Naive thymus-derived CD4-positive, alpha-beta T cell (primary cell): ENCODE measurements at regions of chr12 and their contacts with region 1.

Region 1: DNA sequence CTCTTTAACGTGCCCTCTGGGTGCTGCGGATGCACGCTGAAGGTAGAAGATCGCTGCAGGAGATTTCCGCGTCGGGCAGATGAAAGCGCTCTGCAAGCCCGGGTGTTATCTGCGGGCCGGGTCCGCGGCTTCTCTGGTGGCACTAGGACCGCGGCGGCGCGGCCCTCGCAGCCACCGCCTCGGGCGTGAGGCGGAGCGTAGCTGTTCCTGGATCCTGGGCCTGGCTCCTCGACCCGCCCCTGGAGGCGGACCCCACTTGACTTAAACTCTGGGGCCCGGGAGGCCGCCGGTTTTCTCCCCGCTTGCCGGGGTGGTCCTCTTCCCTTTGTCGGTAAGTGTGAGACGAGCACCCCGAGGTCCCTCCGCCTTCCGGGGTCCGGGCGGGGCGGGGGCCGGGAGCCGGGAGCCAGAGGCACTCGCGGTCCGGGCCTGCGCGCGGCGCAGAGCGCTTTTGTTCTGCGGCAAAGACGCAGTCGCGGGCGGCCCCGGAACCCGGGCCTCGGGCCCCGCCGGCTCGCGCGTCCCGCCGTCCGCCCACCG is at the start of gene RESF1:
- DNase-seq: peak; percentile 67 to 89 (median 85)
- ATAC-seq: peak; percentile 88
- H3K4me3 ChIP-seq: peak within 1 kb of the TSS; percentile 91
- H3K4me3 Mint-ChIP-seq: peak within 1 kb of the TSS; percentile 91 to 97 (median 94)
- H3K27ac ChIP-seq: peak within 1 kb of the TSS; percentile 86
- H3K27ac Mint-ChIP-seq: peak within 1 kb of the TSS; percentile 91 to 98 (median 96)
- H3K4me1 ChIP-seq: peaks cover 23 to 49% of the 10 kb centered on the region in 2 donors
- H3K4me1 Mint-ChIP-seq: peaks cover 43 to 74% (median 57%) of the 10 kb centered on the region in 7 donors
- H3K27me3 ChIP-seq: no peaks in the 10 kb centered on the region
- H3K27me3 Mint-ChIP-seq: no peaks in the 10 kb centered on the region
- total RNA-seq, gene RESF1: 141 to 490 (median 161) TPM

Region 2: DNA sequence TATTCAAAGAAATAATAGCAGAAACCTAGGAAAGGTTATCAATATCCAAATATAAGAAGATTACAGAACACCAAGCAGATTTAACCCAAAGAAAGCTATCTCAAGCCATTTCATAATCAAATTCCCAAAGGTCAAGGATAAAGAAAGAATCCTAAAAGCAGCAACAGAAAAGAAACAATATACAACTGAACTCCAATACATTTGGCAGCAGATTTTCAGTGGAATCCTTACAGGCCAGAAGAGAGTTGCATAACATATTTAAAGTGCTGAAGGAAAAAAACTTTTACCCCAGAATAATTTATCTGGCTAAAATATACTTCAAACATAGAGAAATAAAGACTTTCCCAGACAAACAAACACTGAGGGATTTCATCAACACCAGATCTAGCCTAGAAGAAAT is 422.6 kb before region 1 on chr12:
- CTCF ChIA-PET with region 1: no interaction called
- POLR2A ChIA-PET with region 1: no interaction called
- intact Hi-C with region 1: no loop called
- DNase-seq: no peak
- ATAC-seq: no peak
- H3K4me3 ChIP-seq: no peak overlapping the region
- H3K4me3 Mint-ChIP-seq: no peak overlapping the region
- H3K27ac ChIP-seq: no peak overlapping the region
- H3K27ac Mint-ChIP-seq: no peak overlapping the region
- H3K4me1 ChIP-seq: no peaks in the 10 kb centered on the region
- H3K4me1 Mint-ChIP-seq: no peaks in the 10 kb centered on the region
- H3K27me3 ChIP-seq: no peaks in the 10 kb centered on the region
- H3K27me3 Mint-ChIP-seq: peaks cover 12 to 40% (median 29%) of the 10 kb centered on the region in 5 donors

Region 3: DNA sequence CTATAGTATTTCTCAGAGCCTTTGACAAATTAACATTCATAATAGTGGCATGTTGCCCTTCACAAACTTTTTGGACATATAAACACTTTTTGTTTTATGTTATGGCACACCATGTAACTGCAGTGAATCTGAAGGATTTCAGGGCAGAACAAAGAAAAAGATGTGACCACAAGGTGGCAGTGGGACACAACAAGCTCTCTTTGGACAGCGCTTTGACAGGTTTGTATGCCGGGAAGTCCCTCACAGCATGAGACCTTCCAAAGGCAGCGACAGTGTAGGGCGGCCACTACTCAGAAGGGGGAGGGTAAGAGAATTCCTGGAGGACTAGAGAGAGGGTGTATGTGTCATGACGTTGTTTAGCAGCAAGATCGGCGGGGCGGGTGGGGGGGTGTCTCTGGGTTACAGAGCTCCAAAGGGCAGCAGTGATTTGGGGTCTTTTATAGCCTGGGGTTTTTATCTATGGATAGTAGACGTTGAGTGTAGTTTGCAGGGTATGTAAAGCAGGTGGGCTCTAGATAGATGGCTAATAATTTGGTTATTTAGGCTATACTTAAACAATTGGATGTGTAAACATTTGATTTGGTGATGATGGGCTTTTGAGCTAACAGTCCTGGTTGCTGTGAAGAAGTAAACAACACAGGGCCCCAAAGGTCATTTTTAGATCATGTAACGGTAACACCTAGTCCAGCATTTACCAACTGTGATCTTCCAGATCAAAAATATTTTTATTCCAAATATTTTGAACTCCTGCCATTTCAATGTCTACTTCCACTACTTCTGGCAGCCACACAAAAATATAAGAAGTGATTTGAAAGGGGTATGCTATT is 276.9 kb before region 1 on chr12:
- CTCF ChIA-PET with region 1: interaction called, 8 read pairs
- POLR2A ChIA-PET with region 1: interaction called, 4 read pairs
- intact Hi-C with region 1: loop called (anchors 1 to 2 kb)
- DNase-seq: peak; percentile 30 to 72 (median 66)
- ATAC-seq: peak; percentile 96
- H3K4me3 ChIP-seq: no peak overlapping the region
- H3K4me3 Mint-ChIP-seq: peak overlapping the region in 9 of 10 donors; percentile 2 to 74 (median 23)
- H3K27ac ChIP-seq: no peak overlapping the region
- H3K27ac Mint-ChIP-seq: peak overlapping the region; percentile 9 to 97 (median 74)
- H3K4me1 ChIP-seq: peaks cover 0 to 5% of the 10 kb centered on the region in 2 donors
- H3K4me1 Mint-ChIP-seq: peaks cover 5 to 17% (median 11%) of the 10 kb centered on the region in 7 donors
- H3K27me3 ChIP-seq: no peaks in the 10 kb centered on the region
- H3K27me3 Mint-ChIP-seq: no peaks in the 10 kb centered on the region

Region 4: DNA sequence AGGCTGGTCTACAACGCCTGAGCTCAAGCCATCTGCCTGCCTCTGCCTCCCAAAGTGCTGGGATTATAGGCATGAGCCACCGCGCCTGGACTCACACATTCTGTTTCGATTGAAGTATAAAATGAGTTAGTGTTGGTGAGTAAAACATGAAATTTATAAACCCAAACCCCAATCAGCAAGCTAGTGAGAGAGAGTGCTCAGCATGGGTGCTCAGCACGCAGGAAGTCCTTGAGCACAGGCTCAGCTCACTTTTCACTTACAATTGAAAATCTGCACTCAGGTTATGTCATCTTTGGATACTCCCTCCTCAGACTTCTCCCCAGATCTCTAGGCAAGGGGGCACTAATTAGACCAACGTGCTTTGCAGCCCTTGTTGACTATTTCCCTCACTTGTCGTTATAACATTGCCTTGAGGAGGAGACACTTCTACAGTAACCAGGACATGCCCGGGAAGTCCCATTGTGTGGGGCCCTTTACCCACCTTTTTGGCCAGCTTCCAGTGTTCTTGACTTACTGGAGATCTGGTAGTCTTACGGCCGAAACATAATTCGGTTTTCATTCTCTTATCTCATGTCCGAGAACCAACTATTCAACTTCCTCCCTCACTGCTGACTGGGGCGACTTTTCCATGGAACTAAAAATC is 161.9 kb before region 1 on chr12:
- CTCF ChIA-PET with region 1: no interaction called
- POLR2A ChIA-PET with region 1: interaction called, 3 read pairs
- intact Hi-C with region 1: loop called in 1 of 2 experiments (anchors 2 kb)
- DNase-seq: peak in 6 of 9 donors; percentile 7 to 24 (median 19)
- ATAC-seq: peak; percentile 27
- H3K4me3 ChIP-seq: no peak overlapping the region
- H3K4me3 Mint-ChIP-seq: peak overlapping the region; percentile 8 to 76 (median 71)
- H3K27ac ChIP-seq: peak overlapping the region; percentile 39
- H3K27ac Mint-ChIP-seq: peak overlapping the region; percentile 30 to 93 (median 89)
- H3K4me1 ChIP-seq: peaks cover 0 to 25% of the 10 kb centered on the region in 2 donors
- H3K4me1 Mint-ChIP-seq: peaks cover 16 to 51% (median 46%) of the 10 kb centered on the region in 7 donors
- H3K27me3 ChIP-seq: no peaks in the 10 kb centered on the region
- H3K27me3 Mint-ChIP-seq: no peaks in the 10 kb centered on the region

Region 5: DNA sequence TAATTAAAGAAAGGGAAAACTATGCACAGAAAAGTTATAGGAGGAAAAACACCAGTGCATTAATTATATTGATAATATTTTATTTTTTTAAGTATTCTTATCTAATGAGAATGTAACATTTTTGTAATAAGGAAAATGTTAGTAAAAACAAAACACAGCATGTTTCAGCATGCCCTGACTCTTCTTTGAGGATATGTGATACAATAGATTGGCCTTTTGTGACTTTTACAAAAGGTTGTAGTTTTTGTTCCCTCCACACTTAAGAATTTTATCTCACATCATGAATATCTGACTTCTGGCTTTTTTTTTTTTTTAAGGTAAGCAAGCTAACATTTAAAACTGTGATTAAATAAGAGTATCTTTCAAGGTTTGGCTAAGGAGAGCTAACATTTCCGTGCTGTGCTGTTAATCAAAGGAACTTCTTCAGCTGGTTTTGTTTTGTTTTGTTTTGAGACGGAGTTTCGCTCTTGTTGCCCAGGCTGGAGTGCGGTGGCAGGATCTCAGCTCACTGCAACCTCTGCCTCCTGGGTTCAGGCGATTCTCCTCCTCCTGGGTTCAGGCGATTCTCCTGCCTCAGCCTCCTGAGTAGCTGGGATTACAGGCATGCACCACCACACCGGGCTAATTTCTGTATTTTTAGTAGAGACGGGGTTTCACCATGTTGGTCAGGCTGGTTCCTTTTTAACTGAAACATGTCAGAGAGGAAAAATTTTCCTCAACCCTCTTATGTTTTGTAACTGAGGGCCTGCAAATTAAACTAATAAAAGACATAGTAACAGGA is 30.8 kb before region 1 on chr12:
- CTCF ChIA-PET with region 1: interaction called, 6 read pairs
- POLR2A ChIA-PET with region 1: interaction called, 19 read pairs
- intact Hi-C with region 1: loop called (anchors 1 to 2 kb)
- DNase-seq: peak in 8 of 9 donors; percentile 23 to 64 (median 49)
- ATAC-seq: peak; percentile 70
- H3K4me3 ChIP-seq: peak overlapping the region; percentile 26
- H3K4me3 Mint-ChIP-seq: peak overlapping the region; percentile 79 to 94 (median 90)
- H3K27ac ChIP-seq: peak overlapping the region; percentile 62
- H3K27ac Mint-ChIP-seq: peak overlapping the region; percentile 94 to 100 (median 97)
- H3K4me1 ChIP-seq: peaks cover 30 to 42% of the 10 kb centered on the region in 2 donors
- H3K4me1 Mint-ChIP-seq: peaks cover 27 to 58% (median 50%) of the 10 kb centered on the region in 7 donors
- H3K27me3 ChIP-seq: no peaks in the 10 kb centered on the region
- H3K27me3 Mint-ChIP-seq: no peaks in the 10 kb centered on the region

Region 6: DNA sequence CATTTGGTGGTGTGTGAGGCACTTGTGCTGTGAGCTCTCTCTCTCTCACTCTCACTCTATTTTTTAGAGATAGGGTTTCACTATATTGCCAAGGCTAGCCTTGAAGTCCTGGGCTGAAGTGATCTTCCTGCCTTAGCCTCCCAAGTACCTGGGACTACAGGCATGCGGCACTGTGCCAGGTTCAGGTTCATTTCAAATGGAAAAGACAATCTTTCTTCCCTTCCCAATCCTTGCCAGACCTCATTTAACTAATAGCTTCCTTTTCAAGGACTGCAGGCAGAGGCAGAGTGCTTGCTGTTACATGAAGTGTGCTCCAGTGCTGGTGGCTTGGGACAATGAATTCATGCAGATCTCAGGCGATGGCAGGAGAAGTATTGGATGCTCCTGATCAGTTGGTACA is 74.2 kb after region 1 on chr12:
- CTCF ChIA-PET with region 1: no interaction called
- POLR2A ChIA-PET with region 1: no interaction called
- intact Hi-C with region 1: no loop called
- DNase-seq: no peak
- ATAC-seq: no peak
- H3K4me3 ChIP-seq: no peak overlapping the region
- H3K4me3 Mint-ChIP-seq: no peak overlapping the region
- H3K27ac ChIP-seq: no peak overlapping the region
- H3K27ac Mint-ChIP-seq: peak overlapping the region in 6 of 9 donors; percentile 4 to 69 (median 28)
- H3K4me1 ChIP-seq: no peaks in the 10 kb centered on the region
- H3K4me1 Mint-ChIP-seq: peaks cover 4 to 19% (median 8%) of the 10 kb centered on the region in 7 donors
- H3K27me3 ChIP-seq: no peaks in the 10 kb centered on the region
- H3K27me3 Mint-ChIP-seq: no peaks in the 10 kb centered on the region

Region 7: DNA sequence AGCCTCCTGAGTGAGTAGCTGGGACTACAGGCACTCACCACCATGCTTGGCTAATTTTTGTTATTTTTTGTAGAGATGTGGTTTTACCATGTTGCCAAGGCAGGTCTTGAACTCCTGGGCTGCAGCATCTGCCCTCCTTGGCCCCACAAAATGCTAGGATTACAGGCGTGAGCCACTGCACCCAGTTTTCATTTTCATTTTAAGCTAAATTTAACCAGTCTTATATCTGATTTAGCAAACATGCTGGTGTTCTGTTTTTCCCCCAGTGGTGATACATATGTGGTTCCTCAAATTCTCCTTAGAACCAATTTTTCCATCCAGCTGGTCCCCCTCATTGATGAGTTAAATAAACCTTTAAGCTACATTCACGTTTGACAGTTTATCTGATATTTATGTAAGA is 103.7 kb after region 1 on chr12:
- CTCF ChIA-PET with region 1: interaction called, 5 read pairs
- POLR2A ChIA-PET with region 1: interaction called, 5 read pairs
- intact Hi-C with region 1: loop called in 1 of 2 experiments (anchors 5 kb)
- DNase-seq: no peak
- ATAC-seq: no peak
- H3K4me3 ChIP-seq: no peak overlapping the region
- H3K4me3 Mint-ChIP-seq: no peak overlapping the region
- H3K27ac ChIP-seq: no peak overlapping the region
- H3K27ac Mint-ChIP-seq: no peak overlapping the region
- H3K4me1 ChIP-seq: no peaks in the 10 kb centered on the region
- H3K4me1 Mint-ChIP-seq: peaks cover 7 to 26% (median 15%) of the 10 kb centered on the region in 7 donors
- H3K27me3 ChIP-seq: no peaks in the 10 kb centered on the region
- H3K27me3 Mint-ChIP-seq: no peaks in the 10 kb centered on the region

Region 8: GRCh38 chr12:32755654-32756475 is 796.6 kb after region 1 on chr12 and contains the start of gene YARS2:
- CTCF ChIA-PET with region 1: no interaction called
- POLR2A ChIA-PET with region 1: no interaction called
- intact Hi-C with region 1: loop called in 1 of 2 experiments (anchors 1 kb)
- DNase-seq: peak; percentile 62 to 86 (median 83)
- ATAC-seq: peak; percentile 92
- H3K4me3 ChIP-seq: peak within 1 kb of the TSS; percentile 68
- H3K4me3 Mint-ChIP-seq: peak within 1 kb of the TSS; percentile 84 to 99 (median 90)
- H3K27ac ChIP-seq: peak within 1 kb of the TSS; percentile 76
- H3K27ac Mint-ChIP-seq: peak within 1 kb of the TSS; percentile 81 to 99 (median 94)
- H3K4me1 ChIP-seq: peaks cover 13% of the 10 kb centered on the region in 2 donors
- H3K4me1 Mint-ChIP-seq: peaks cover 0 to 21% (median 20%) of the 10 kb centered on the region in 7 donors
- H3K27me3 ChIP-seq: no peaks in the 10 kb centered on the region
- H3K27me3 Mint-ChIP-seq: peaks cover 0 to 4% (median 0%) of the 10 kb centered on the region in 5 donors
- total RNA-seq, gene YARS2: 11.3 to 24.0 (median 17.9) TPM